ENCODE measurements at regions of chr1 and their contacts with region 1.

Region 1: GRCh38 chr1:28602536-28603439 is 10.7 kb downstream of the RAB42 start:
- DNase-seq: peak; percentile 54 to 74
- H3K4me3 ChIP-seq: no peak overlapping the region
- H3K27ac ChIP-seq: peak overlapping the region in 1 of 2 donors; percentile 39
- H3K4me1 ChIP-seq: no peaks in the 10 kb centered on the region
- H3K27me3 ChIP-seq: no peaks in the 10 kb centered on the region
- CTCF ChIP-seq: peak; percentile 61 to 85 (median 72)
- POLR2A ChIP-seq: no peak

Region 2: DNA sequence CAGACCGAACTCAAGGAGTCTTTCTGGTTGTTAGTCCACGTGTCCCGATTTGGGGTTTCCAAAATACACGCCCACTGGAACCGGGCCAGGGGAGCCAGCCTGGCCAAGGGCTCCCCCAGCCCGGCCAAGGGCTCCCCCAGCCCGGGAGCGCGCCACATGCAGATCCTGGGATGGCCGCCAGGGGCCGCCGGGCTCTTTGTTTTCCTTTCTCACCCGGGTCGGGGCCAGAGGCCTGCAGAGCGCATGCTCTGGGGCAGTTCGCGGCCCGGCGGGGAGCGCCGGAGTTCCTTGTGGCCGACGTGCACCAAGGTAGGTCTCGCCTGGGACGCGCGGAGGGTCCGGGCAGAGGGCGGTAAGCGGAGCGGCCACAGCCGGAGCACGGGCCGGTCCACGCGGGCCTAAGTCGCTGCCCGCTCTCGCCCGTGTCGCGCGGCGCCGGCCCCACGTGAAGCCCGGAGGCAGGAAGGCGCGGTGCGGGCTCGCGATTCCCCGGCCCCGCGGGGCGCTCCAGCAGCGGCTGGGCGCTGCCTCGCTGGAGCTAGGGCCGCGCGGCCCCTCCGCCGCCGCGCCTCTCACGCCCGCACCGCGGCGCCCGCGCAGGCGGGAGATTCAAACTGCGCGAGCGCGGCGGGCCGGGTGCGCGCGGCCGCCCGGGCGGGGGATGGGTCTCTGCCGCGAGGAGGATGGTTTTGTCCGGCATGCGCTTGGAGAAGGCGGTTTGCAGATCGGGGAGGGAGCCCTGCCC is 84.6 kb before region 1 on chr1:
- intact Hi-C with region 1: loop called (anchors 5 kb)
- DNase-seq: peak; percentile 86 to 90
- H3K4me3 ChIP-seq: peak overlapping the region; percentile 31 to 53
- H3K27ac ChIP-seq: peak overlapping the region; percentile 84 to 85
- H3K4me1 ChIP-seq: peaks cover 3 to 7% of the 10 kb centered on the region in 2 donors
- H3K27me3 ChIP-seq: no peaks in the 10 kb centered on the region
- CTCF ChIP-seq: peak; percentile 95 to 98 (median 97)
- POLR2A ChIP-seq: peak; percentile 23 to 61